Mammary epithelial cell (primary cell): ENCODE measurements at regions of chr2 and their contacts with region 1.

Region 1: GRCh38 chr2:201696151-201696659 is 2.2 kb downstream of the MPP4 start:
- DNase-seq: peak; percentile 74
- H3K4me3 ChIP-seq: no peak overlapping the region
- H3K27ac ChIP-seq: no peak overlapping the region
- H3K4me1 ChIP-seq: peaks cover 40% of the 10 kb centered on the region
- H3K27me3 ChIP-seq: no peaks in the 10 kb centered on the region
- CTCF ChIP-seq: no peak

Region 2: GRCh38 chr2:201642579-201643215 is 53.5 kb before region 1 on chr2:
- CTCF ChIA-PET with region 1: no interaction called
- dilution Hi-C with region 1: no loop called
- in situ Hi-C with region 1: no loop called
- intact Hi-C with region 1: loop called (anchors 5 kb)
- DNase-seq: peak; percentile 81
- H3K4me3 ChIP-seq: peak overlapping the region; percentile 65 to 97 (median 69)
- H3K27ac ChIP-seq: peak overlapping the region; percentile 74
- H3K4me1 ChIP-seq: peaks cover 19% of the 10 kb centered on the region
- H3K27me3 ChIP-seq: no peaks in the 10 kb centered on the region
- CTCF ChIP-seq: no peak